ENCODE measurements at regions of chr17 and their contacts with region 1.

Region 1: GRCh38 chr17:57892146-57892828 is 42.4 kb upstream of the MRPS23 start:
- DNase-seq: peak; percentile 89 to 91
- H3K4me3 ChIP-seq: no peak overlapping the region
- H3K27ac ChIP-seq: peak overlapping the region; percentile 90 to 99 (median 93)
- H3K4me1 ChIP-seq: peaks cover 54 to 68% of the 10 kb centered on the region in 2 donors
- H3K27me3 ChIP-seq: no peaks in the 10 kb centered on the region
- CTCF ChIP-seq: peak; percentile 86 to 99 (median 97)
- POLR2A ChIP-seq: no peak

Region 2: DNA sequence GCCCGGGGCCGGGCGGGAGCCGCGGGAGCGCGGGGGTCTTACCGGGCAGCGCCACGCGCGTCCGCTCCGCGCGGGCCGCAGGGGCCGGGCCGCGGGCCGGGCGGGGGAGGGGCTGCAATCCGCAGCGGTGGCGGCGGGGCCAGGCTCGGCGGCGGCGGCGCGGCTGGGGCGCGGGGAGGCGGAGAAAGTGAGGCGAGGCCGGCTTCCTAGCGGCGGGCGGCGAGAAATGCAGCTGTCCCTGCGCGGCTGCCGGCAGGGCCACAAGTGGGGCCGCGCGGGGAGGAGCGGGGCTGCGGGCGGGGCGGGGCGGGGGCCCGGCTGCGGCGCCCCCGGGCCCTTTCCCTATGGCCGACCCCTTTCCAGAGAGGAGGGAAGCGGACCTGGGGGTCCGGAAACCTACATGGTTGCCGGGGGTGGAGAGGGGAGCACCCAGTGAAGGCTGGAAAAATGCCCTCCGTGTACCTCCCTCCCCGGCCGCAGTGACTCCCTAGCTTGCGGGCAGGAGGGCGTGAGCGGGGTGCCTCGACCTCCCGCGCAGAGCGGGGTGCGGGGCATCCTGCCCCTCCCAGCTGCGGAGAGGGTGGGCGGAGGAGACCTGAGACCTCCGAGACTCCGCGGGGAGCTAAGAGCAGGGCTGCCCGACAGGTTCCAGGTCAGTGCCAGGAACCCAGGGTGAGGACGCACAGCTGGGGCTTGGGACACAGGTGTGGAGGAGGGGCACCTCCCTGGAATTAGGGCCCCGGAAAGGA is 63.1 kb after region 1 on chr17 and contains the start of gene CUEDC1:
- intact Hi-C with region 1: loop called (anchors 5 kb)
- DNase-seq: peak; percentile 77 to 80
- H3K4me3 ChIP-seq: peak within 1 kb of the TSS; percentile 42 to 97 (median 79)
- H3K27ac ChIP-seq: peak within 1 kb of the TSS; percentile 74 to 97 (median 95)
- H3K4me1 ChIP-seq: peaks cover 15 to 33% of the 10 kb centered on the region in 2 donors
- H3K27me3 ChIP-seq: no peaks in the 10 kb centered on the region
- CTCF ChIP-seq: peak in 4 of 6 experiments; percentile 7 to 61 (median 46)
- POLR2A ChIP-seq: peak in 1 of 2 donors; percentile 56
- total RNA-seq, gene CUEDC1: 25.6 to 32.3 (median 29.9) TPM

Region 3: DNA sequence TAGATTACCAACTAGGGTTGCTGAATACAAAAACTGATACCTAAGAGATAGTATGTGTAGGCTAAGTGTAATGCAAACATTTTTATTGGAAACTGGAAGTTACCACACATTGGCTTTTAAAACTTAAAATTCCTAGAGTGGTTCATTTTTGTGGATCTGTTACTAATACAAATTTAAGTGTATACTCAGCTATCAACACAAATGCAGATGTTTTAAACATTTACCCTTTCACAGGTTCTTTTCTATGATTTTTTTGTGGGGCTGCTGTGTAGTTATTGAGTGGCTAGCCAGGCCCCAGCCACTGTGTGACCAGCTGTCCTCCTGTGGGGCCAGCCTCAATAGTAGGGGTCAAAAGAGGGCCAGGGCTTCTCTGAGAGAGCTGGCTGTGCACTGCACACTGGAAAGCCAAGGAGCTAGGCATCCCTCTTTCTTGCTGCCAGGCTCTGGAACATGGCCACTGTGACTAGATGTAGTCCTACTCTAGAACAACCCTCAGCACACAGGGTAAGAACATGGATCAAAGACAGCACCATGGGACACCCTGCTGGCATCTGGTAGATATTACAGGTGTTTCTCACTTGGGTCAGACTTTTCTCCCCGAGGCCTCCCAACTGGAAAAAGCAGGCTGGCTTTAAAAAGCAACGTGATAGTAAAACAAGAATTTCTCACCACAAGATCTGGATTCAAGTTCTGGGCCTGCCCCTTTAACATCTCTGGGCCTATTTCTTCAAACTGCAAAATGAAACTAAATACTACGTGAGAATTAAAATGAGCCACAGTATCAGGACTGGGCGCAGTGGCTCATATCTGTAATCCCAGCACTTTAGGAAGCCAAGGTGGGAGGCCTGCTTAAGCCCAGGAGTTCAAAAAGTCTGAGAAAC is 103.0 kb after region 1 on chr17:
- intact Hi-C with region 1: loop called (anchors 5 kb)
- DNase-seq: peak; percentile 73 to 74
- H3K4me3 ChIP-seq: no peak overlapping the region
- H3K27ac ChIP-seq: no peak overlapping the region
- H3K4me1 ChIP-seq: peaks cover 0 to 16% of the 10 kb centered on the region in 2 donors
- H3K27me3 ChIP-seq: no peaks in the 10 kb centered on the region
- CTCF ChIP-seq: peak in 5 of 6 experiments; percentile 62 to 89 (median 74)
- POLR2A ChIP-seq: no peak